ENCODE measurements at regions of chr3 and their contacts with region 1.

Region 1: DNA sequence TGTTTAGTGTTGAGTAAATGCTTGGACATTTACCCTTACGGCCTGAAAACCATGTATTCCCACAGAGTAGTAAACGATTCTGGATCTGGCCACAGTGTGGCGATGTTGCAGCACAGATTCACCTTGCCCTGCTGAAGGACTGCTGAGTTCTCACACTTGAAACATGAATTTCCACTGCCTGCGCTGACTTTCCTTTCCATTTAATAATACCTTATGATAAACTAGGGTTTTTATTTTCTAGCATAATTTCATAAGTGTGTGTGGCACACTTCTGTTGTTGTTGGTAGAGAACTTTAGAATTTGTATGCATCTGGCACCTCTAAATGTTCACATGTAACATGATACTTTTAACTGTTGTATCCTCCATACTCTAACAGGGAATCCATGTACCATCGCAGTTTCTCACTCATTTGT is 53.9 kb downstream of the C3orf38 start:
- DNase-seq: peak; percentile 57 to 85
- ATAC-seq: peak; percentile 83
- H3K4me3 ChIP-seq: no peak overlapping the region
- H3K27ac ChIP-seq: no peak overlapping the region
- H3K4me1 ChIP-seq: no peaks in the 10 kb centered on the region
- H3K27me3 ChIP-seq: peaks cover 0 to 3% of the 10 kb centered on the region in 2 donors

Region 2: GRCh38 chr3:88668180-88668579 is 464.5 kb after region 1 on chr3:
- intact Hi-C with region 1: no loop called
- DNase-seq: no peak
- ATAC-seq: no peak
- H3K4me3 ChIP-seq: no peak overlapping the region
- H3K27ac ChIP-seq: no peak overlapping the region
- H3K4me1 ChIP-seq: no peaks in the 10 kb centered on the region
- H3K27me3 ChIP-seq: no peaks in the 10 kb centered on the region

Region 3: GRCh38 chr3:89098964-89099585 is 895.4 kb after region 1 on chr3:
- intact Hi-C with region 1: loop called in 1 of 2 experiments (anchors 10 kb)
- DNase-seq: no peak
- ATAC-seq: peak; percentile 83
- H3K4me3 ChIP-seq: no peak overlapping the region
- H3K27ac ChIP-seq: no peak overlapping the region
- H3K4me1 ChIP-seq: no peaks in the 10 kb centered on the region
- H3K27me3 ChIP-seq: no peaks in the 10 kb centered on the region

Region 4: GRCh38 chr3:90091204-90091924 is 1887.7 kb after region 1 on chr3:
- intact Hi-C with region 1: loop called in 1 of 2 experiments (anchors 10 kb)
- DNase-seq: no peak
- ATAC-seq: no peak
- H3K4me3 ChIP-seq: no peak overlapping the region
- H3K27ac ChIP-seq: no peak overlapping the region
- H3K4me1 ChIP-seq: no peaks in the 10 kb centered on the region
- H3K27me3 ChIP-seq: no peaks in the 10 kb centered on the region

Region 5: GRCh38 chr3:90184861-90185260 is 1981.2 kb after region 1 on chr3:
- intact Hi-C with region 1: loop called (anchors 5 kb)
- DNase-seq: no peak
- ATAC-seq: no peak
- H3K4me3 ChIP-seq: no peak overlapping the region
- H3K27ac ChIP-seq: no peak overlapping the region
- H3K4me1 ChIP-seq: no peaks in the 10 kb centered on the region
- H3K27me3 ChIP-seq: no peaks in the 10 kb centered on the region